CD14-positive monocyte (primary cell): ENCODE measurements at regions of chr11 and their contacts with region 1.

Region 1: DNA sequence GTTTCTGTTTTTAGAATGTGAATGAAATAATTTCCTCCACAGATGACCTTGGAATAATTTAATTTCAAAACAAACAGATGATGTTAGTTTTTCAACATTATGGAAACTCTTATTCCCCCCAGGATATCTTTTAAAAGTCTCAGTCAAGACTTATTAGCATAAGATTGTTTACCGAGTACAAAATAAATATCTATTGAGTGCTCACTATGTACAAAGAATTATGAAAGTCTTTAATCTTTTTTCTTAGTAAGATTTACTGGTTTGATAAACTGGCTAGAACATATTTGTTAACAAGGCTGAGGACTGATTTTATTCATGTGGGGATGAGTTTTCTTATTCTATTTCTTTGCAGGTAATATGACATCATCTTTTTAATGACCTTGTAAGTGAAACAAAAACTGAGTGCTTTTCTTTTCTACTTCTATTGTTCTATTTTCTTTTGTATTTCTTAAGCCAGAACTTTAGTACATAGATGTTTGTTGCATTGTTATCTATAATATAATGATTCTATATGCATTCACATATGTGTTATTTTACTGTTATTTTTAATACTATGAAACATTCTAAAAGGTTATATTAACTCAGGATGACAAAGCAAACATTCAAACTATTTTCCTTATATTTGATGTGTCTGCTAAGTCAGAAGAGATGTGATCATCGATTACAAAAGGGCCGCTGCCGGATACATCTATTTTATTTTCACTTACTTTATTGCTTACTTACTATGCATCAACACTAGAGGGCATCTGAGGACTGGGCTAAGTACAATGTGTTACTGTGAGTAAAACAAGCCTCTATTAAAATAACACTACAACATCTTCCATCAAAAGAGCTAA is 111.0 kb upstream of the ARHGAP42 start:
- DNase-seq: peak in 1 of 3 donors; percentile 11
- H3K4me3 ChIP-seq: no peak overlapping the region
- H3K4me3 Mint-ChIP-seq: no peak overlapping the region
- H3K27ac ChIP-seq: no peak overlapping the region
- H3K27ac Mint-ChIP-seq: no peak overlapping the region
- H3K4me1 ChIP-seq: no peaks in the 10 kb centered on the region
- H3K4me1 Mint-ChIP-seq: no peaks in the 10 kb centered on the region
- H3K27me3 ChIP-seq: no peaks in the 10 kb centered on the region
- H3K27me3 Mint-ChIP-seq: no peaks in the 10 kb centered on the region
- CTCF ChIP-seq: peak; percentile 39

Region 2: GRCh38 chr11:100930185-100930778 is 354.2 kb after region 1 on chr11:
- intact Hi-C with region 1: loop called in 1 of 2 experiments (anchors 5 kb)
- DNase-seq: no peak
- H3K4me3 ChIP-seq: no peak overlapping the region
- H3K4me3 Mint-ChIP-seq: no peak overlapping the region
- H3K27ac ChIP-seq: no peak overlapping the region
- H3K27ac Mint-ChIP-seq: no peak overlapping the region
- H3K4me1 ChIP-seq: no peaks in the 10 kb centered on the region
- H3K4me1 Mint-ChIP-seq: no peaks in the 10 kb centered on the region
- H3K27me3 ChIP-seq: no peaks in the 10 kb centered on the region
- H3K27me3 Mint-ChIP-seq: peaks cover 0 to 2% (median 0%) of the 10 kb centered on the region in 3 donors
- CTCF ChIP-seq: peak; percentile 60